H1 (cell line): ENCODE measurements at regions of chr6 and their contacts with region 1.

Region 1: GRCh38 chr6:154733012-154733625 is at the start of gene SCAF8:
- DNase-seq: peak; percentile 34 to 93
- H3K4me3 ChIP-seq: peak within 1 kb of the TSS; percentile 72 to 97 (median 87)
- H3K27ac ChIP-seq: peak within 1 kb of the TSS; percentile 99
- H3K4me1 ChIP-seq: peaks cover 0 to 9% (median 3%) of the 10 kb centered on the region in 4 experiments; a peak in 4 of 7 replicates
- H3K27me3 ChIP-seq: no peaks in the 10 kb centered on the region
- CTCF ChIP-seq: peak; percentile 85 to 87 (median 87)
- EP300 ChIP-seq: no peak
- POLR2A ChIP-seq: peak; percentile 76 to 94; a peak in 2 of 3 replicates
- RAD21 ChIP-seq: peak; percentile 38 to 56; a peak in 3 of 4 replicates
- total RNA-seq, gene SCAF8: 45.5 and 46.3 TPM in 2 replicates

Region 2: GRCh38 chr6:154386848-154387717 is 346.0 kb before region 1 on chr6:
- CTCF ChIA-PET with region 1: no interaction called
- POLR2A ChIA-PET with region 1: no interaction called
- DNase-seq: no peak
- H3K4me3 ChIP-seq: no peak overlapping the region
- H3K27ac ChIP-seq: no peak overlapping the region
- H3K4me1 ChIP-seq: no peaks in the 10 kb centered on the region
- H3K27me3 ChIP-seq: no peaks in the 10 kb centered on the region
- CTCF ChIP-seq: no peak
- EP300 ChIP-seq: no peak
- POLR2A ChIP-seq: no peak
- RAD21 ChIP-seq: no peak

Region 3: GRCh38 chr6:154721460-154721859 is 11.7 kb before region 1 on chr6:
- CTCF ChIA-PET with region 1: interaction called, 14 read pairs
- POLR2A ChIA-PET with region 1: interaction called, 10 read pairs
- DNase-seq: no peak
- H3K4me3 ChIP-seq: no peak overlapping the region
- H3K27ac ChIP-seq: no peak overlapping the region
- H3K4me1 ChIP-seq: no peaks in the 10 kb centered on the region
- H3K27me3 ChIP-seq: no peaks in the 10 kb centered on the region
- CTCF ChIP-seq: no peak
- EP300 ChIP-seq: no peak
- POLR2A ChIP-seq: no peak
- RAD21 ChIP-seq: no peak

Region 4: DNA sequence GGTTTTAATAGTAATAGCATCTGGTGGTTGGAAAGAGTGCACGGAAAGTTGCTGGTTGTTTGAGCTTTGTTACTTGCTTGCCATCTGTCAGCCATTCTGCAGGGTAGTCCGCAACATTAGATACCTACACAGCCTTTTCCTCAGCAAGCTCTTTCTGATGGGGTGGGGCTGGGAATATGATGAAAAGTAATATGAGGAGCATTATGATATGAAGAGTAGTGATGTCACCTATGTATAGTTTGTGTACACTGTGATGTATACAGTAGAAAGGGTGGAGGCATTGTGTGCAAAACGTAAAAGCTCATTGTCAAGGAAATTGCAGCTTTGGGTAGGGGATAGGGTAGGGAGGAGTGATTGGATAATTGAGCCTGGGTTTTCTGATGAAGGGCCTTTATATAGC is 16.2 kb after region 1 on chr6:
- CTCF ChIA-PET with region 1: interaction called, 4 read pairs
- POLR2A ChIA-PET with region 1: interaction called, 65 read pairs
- DNase-seq: no peak
- H3K4me3 ChIP-seq: no peak overlapping the region
- H3K27ac ChIP-seq: no peak overlapping the region
- H3K4me1 ChIP-seq: peaks cover 0 to 3% (median 2%) of the 10 kb centered on the region in 4 experiments; a peak in 2 of 7 replicates
- H3K27me3 ChIP-seq: no peaks in the 10 kb centered on the region
- CTCF ChIP-seq: no peak
- EP300 ChIP-seq: no peak
- POLR2A ChIP-seq: no peak
- RAD21 ChIP-seq: no peak